Activated T-helper 1 cell treated with anti-CD3 and anti-CD28 coated beads, Interleukin-12 subunit alpha, Interleukin-12 subunit beta, Interleukin-2, Interleukin-4 antibody, amounts not matched to agents 30 ng/mL and 10 ng/mL and 1 ng/mL, durations not matched to agents 14 hours and 24 hours and 36 hours (primary cell): ENCODE measurements at regions of chr5 and their contacts with region 1.

Region 1: DNA sequence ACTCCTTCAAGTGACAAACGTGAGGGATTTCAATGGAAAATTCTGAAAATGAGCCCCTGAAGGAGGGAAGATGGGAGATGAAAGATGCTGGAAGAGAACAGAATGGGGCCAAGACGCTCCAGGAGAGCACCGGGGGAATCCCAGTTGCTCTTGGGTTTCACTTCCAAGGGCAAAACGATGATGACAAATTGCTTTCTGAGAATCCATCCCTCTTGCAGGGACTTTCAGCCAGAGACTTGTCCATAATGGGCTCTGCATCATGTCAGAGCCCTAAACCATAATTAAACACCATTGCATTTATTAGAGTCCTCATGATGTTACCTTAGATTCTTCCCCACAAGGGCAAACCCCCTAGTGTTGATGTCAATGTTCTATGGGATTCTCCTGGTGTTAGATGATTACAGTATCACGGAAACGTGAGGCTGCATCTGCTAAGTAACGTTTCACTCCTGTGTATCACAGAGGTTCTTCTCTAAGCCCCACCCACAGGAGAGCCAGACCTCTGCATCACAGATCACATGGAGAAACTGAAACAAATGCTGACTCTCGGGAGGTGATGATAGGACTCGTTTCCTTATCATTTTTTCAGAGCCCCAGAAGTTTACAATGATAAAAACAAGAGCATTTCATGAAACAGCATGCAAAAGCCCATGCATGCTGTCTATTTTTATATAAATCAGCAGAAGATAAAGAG is 114.4 kb downstream of the TENT4A start:
- DNase-seq: peak; percentile 46
- H3K4me3 Mint-ChIP-seq: peak overlapping the region; percentile 76
- H3K27ac Mint-ChIP-seq: peak overlapping the region; percentile 84
- H3K4me1 Mint-ChIP-seq: peaks cover 56% of the 10 kb centered on the region
- H3K27me3 Mint-ChIP-seq: peaks cover 5% of the 10 kb centered on the region

Region 2: GRCh38 chr5:5421961-5422818 is 1405.5 kb before region 1 on chr5 and contains the start of gene ICE1:
- intact Hi-C with region 1: loop called (anchors 5 kb)
- DNase-seq: peak; percentile 91
- H3K4me3 Mint-ChIP-seq: peak within 1 kb of the TSS; percentile 96
- H3K27ac Mint-ChIP-seq: peak within 1 kb of the TSS; percentile 98
- H3K4me1 Mint-ChIP-seq: peaks cover 18% of the 10 kb centered on the region
- H3K27me3 Mint-ChIP-seq: no peaks in the 10 kb centered on the region
- total RNA-seq, gene ICE1: 35.3 and 38.2 TPM in 2 replicates

Region 3: GRCh38 chr5:6328173-6328572 is 499.5 kb before region 1 on chr5:
- intact Hi-C with region 1: no loop called
- DNase-seq: no peak
- H3K4me3 Mint-ChIP-seq: no peak overlapping the region
- H3K27ac Mint-ChIP-seq: no peak overlapping the region
- H3K4me1 Mint-ChIP-seq: no peaks in the 10 kb centered on the region
- H3K27me3 Mint-ChIP-seq: no peaks in the 10 kb centered on the region

Region 4: GRCh38 chr5:6632917-6633468 is 194.7 kb before region 1 on chr5 and contains the starts of genes NSUN2 and SRD5A1:
- intact Hi-C with region 1: loop called (anchors 2 kb)
- DNase-seq: peak; percentile 90
- H3K4me3 Mint-ChIP-seq: peak within 1 kb of the TSS; percentile 98
- H3K27ac Mint-ChIP-seq: peak within 1 kb of the TSS; percentile 97
- H3K4me1 Mint-ChIP-seq: peaks cover 57% of the 10 kb centered on the region
- H3K27me3 Mint-ChIP-seq: no peaks in the 10 kb centered on the region
- total RNA-seq, gene NSUN2: 146 and 149 TPM in 2 replicates
- total RNA-seq, gene SRD5A1: 13.8 and 14.0 TPM in 2 replicates

Region 5: DNA sequence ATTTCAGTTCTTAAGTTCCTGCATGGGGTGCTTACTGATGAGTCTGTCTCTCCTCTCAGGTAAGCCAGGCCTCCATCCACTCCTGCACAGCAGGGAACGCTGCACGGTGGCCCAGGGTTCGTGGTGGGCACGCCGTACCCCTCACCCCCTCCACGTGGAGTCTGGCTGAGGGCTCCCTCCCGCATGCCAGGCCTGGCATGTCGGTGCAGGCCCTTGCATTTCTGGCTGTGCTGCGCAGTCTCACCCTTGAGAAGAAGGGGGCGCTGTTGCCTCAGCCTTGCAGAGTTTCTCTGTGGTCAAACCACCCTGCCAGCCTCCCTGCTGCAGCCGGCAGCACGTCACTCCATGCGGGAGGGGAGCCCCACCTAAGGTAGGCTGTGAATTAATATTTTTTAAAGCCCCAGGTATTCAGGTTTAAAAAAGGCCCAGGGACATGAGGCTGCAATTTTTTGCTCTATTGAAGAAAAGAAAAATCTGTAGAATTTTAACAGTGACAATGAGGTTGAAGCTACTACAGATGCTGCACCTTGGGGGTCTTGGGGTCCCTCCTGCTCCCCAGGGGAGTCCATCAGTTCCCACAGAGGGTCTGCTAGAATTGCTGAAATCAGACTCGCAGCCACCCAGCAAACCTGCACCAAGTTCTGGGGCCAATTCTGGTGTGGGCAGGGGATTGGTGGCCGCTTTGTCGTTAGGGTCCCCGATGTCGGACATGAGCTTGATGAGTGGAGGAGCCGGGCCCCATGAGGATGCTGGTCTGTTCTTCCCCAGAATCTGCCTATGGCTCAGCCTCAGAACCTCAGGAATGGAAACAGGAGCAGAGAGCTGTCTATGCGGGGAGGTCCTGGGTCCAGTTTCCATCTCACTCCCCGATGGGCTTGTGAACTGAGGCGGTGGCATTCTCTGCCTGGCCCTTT is 61.8 kb before region 1 on chr5:
- intact Hi-C with region 1: loop called (anchors 5 kb)
- DNase-seq: peak; percentile 63
- H3K4me3 Mint-ChIP-seq: no peak overlapping the region
- H3K27ac Mint-ChIP-seq: peak overlapping the region; percentile 34
- H3K4me1 Mint-ChIP-seq: peaks cover 5% of the 10 kb centered on the region
- H3K27me3 Mint-ChIP-seq: no peaks in the 10 kb centered on the region

Region 6: DNA sequence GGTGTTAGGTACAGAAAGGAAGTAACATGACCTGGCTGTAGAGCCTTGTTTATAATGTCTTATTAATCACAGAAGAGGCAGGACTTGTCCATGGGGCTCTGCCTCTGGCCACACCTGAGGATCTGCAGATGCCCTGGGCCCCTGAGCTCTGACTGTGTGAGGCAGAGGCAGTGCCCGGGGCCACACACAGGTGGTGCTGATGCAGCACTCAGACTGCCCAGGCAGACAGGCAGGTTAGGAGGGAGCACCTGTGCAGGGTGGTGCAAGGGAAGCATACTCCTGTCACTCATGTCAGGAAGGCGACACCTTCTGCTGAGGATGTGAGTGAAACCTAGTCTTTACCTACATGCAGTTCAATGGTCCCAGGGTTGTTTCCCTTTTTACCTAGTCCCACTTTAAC is 934.6 kb after region 1 on chr5:
- intact Hi-C with region 1: no loop called
- DNase-seq: no peak
- H3K4me3 Mint-ChIP-seq: no peak overlapping the region
- H3K27ac Mint-ChIP-seq: no peak overlapping the region
- H3K4me1 Mint-ChIP-seq: no peaks in the 10 kb centered on the region
- H3K27me3 Mint-ChIP-seq: no peaks in the 10 kb centered on the region

Region 7: GRCh38 chr5:7868773-7869473 is 1041.2 kb after region 1 on chr5 and contains the starts of genes FASTKD3 and MTRR:
- intact Hi-C with region 1: loop called (anchors 2 kb)
- DNase-seq: peak; percentile 87
- H3K4me3 Mint-ChIP-seq: peak within 1 kb of the TSS; percentile 97
- H3K27ac Mint-ChIP-seq: peak within 1 kb of the TSS; percentile 89
- H3K4me1 Mint-ChIP-seq: peaks cover 73% of the 10 kb centered on the region
- H3K27me3 Mint-ChIP-seq: no peaks in the 10 kb centered on the region
- total RNA-seq, gene FASTKD3: 13.5 and 18.6 TPM in 2 replicates
- total RNA-seq, gene MTRR: 83.0 and 90.4 TPM in 2 replicates

Region 8: GRCh38 chr5:7904170-7904569 is 1076.5 kb after region 1 on chr5:
- intact Hi-C with region 1: loop called (anchors 2 kb)
- DNase-seq: no peak
- H3K4me3 Mint-ChIP-seq: peak overlapping the region; percentile 4
- H3K27ac Mint-ChIP-seq: peak overlapping the region; percentile 74
- H3K4me1 Mint-ChIP-seq: peaks cover 23% of the 10 kb centered on the region
- H3K27me3 Mint-ChIP-seq: no peaks in the 10 kb centered on the region